Common myeloid progenitor, CD34-positive (primary cell): ENCODE measurements at regions of chr5 and their contacts with region 1.

Region 1: DNA sequence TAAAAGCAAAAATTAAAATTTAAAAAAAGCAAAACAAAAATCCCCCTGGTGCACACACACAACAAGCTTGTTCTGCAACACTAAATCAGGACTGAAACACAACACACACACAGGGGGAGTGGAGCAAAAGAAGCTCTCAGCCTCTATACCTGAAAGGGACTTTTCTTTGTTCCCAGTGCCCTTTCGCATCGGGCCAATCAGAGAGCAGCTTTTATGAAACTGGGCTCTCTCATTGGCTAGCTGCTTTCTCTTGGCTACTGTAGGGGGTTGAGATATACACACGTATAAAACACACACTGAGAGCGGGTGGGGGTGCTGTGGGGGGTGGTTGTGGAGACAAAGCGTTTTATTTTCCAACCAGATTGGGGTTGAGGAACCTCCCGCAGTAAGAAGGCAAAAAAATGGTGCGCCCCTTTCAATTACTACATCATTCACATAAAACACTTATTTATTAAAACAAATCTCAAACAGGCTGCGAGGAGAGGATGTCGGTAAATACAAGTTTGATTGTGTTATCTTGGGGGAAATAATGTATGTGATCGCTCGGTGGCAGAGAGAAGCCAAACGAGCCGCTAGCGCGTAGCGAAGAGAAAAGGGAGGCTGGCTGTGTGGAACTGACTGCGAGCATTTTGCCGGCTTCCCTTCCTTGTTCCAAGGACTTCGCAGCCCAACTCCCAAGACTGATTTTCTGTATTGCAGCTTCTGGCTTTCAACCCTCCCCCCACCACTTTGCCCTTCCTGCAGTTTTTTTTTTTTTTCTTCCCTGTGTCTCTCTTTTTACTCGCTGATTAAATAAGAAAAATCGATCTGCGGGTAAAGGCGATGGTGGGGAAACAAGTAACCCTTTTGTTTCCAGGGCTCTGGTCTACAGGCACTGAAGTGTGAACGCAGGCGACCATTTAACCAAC is 2.5 kb upstream of the ZNF608 start:
- DNase-seq: peak; percentile 90 to 97 (median 96)
- H3K4me3 ChIP-seq: peak overlapping the region; percentile 26 to 96 (median 85)
- H3K27ac ChIP-seq: peak overlapping the region in 1 of 2 experiments; percentile 90
- H3K4me1 ChIP-seq: peaks cover 13 to 47% (median 30%) of the 10 kb centered on the region in 4 experiments
- H3K27me3 ChIP-seq: no peaks in the 10 kb centered on the region

Region 2: GRCh38 chr5:124773315-124774311 is 24.7 kb after region 1 on chr5:
- CTCF ChIA-PET with region 1: interaction called, 12 read pairs
- POLR2A ChIA-PET with region 1: no interaction called
- DNase-seq: peak; percentile 65 to 96 (median 91)
- H3K4me3 ChIP-seq: peak overlapping the region in 3 of 7 experiments; percentile 10 to 40 (median 33)
- H3K27ac ChIP-seq: peak overlapping the region in 1 of 2 experiments; percentile 52
- H3K4me1 ChIP-seq: peaks cover 2 to 15% (median 8%) of the 10 kb centered on the region in 4 experiments
- H3K27me3 ChIP-seq: no peaks in the 10 kb centered on the region